CD8-positive, alpha-beta T cell (primary cell): ENCODE measurements at regions of chr6 and their contacts with region 1.

Region 1: GRCh38 chr6:135909737-135910387 is 58.4 kb downstream of the PDE7B start:
- DNase-seq: peak; percentile 12 to 84 (median 59)
- ATAC-seq: peak; percentile 92
- H3K4me3 ChIP-seq: no peak overlapping the region
- H3K4me3 Mint-ChIP-seq: no peak overlapping the region
- H3K27ac ChIP-seq: no peak overlapping the region
- H3K27ac Mint-ChIP-seq: no peak overlapping the region
- H3K4me1 ChIP-seq: no peaks in the 10 kb centered on the region
- H3K4me1 Mint-ChIP-seq: peaks cover 4% of the 10 kb centered on the region
- H3K27me3 ChIP-seq: no peaks in the 10 kb centered on the region
- H3K27me3 Mint-ChIP-seq: no peaks in the 10 kb centered on the region
- CTCF ChIP-seq: peak; percentile 68

Region 2: GRCh38 chr6:135506270-135506997 is 403.4 kb before region 1 on chr6:
- CTCF ChIA-PET with region 1: interaction called, 10 read pairs
- POLR2A ChIA-PET with region 1: no interaction called
- intact Hi-C with region 1: loop called (anchors 1 to 2 kb)
- DNase-seq: peak in 3 of 9 experiments; percentile 7 to 76 (median 65)
- ATAC-seq: peak; percentile 82
- H3K4me3 ChIP-seq: no peak overlapping the region
- H3K4me3 Mint-ChIP-seq: peak overlapping the region; percentile 13
- H3K27ac ChIP-seq: peak overlapping the region in 1 of 2 experiments; percentile 30
- H3K27ac Mint-ChIP-seq: no peak overlapping the region
- H3K4me1 ChIP-seq: no peaks in the 10 kb centered on the region
- H3K4me1 Mint-ChIP-seq: peaks cover 4% of the 10 kb centered on the region
- H3K27me3 ChIP-seq: no peaks in the 10 kb centered on the region
- H3K27me3 Mint-ChIP-seq: no peaks in the 10 kb centered on the region
- CTCF ChIP-seq: peak; percentile 63

Region 3: GRCh38 chr6:135606392-135606791 is 303.5 kb before region 1 on chr6:
- CTCF ChIA-PET with region 1: no interaction called
- POLR2A ChIA-PET with region 1: no interaction called
- intact Hi-C with region 1: no loop called
- DNase-seq: no peak
- ATAC-seq: no peak
- H3K4me3 ChIP-seq: no peak overlapping the region
- H3K4me3 Mint-ChIP-seq: no peak overlapping the region
- H3K27ac ChIP-seq: no peak overlapping the region
- H3K27ac Mint-ChIP-seq: no peak overlapping the region
- H3K4me1 ChIP-seq: no peaks in the 10 kb centered on the region
- H3K4me1 Mint-ChIP-seq: no peaks in the 10 kb centered on the region
- H3K27me3 ChIP-seq: no peaks in the 10 kb centered on the region
- H3K27me3 Mint-ChIP-seq: no peaks in the 10 kb centered on the region
- CTCF ChIP-seq: no peak

Region 4: DNA sequence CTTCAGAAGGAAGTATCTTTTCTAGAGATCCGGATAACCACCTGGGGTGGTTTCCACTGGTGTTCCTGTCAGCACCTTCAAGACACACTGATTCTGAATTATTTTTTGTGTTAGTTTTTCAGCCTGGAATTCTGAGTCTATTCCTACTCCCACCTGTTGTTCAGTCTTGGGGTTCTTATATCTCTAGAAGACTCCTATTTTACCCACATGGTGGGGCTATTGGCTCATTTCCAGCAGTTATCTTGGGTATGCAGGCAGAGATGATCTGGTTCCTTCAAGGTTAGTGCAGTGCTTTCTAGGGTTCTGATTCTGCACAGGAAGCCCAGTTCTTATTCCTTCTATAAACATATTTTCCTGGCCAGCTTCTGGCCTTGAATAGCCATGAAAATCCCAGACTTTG is 234.0 kb before region 1 on chr6:
- CTCF ChIA-PET with region 1: interaction called, 114 read pairs
- POLR2A ChIA-PET with region 1: interaction called, 6 read pairs
- intact Hi-C with region 1: loop called (anchors 1 kb)
- DNase-seq: peak in 7 of 9 experiments; percentile 4 to 75 (median 38)
- ATAC-seq: peak; percentile 75
- H3K4me3 ChIP-seq: no peak overlapping the region
- H3K4me3 Mint-ChIP-seq: no peak overlapping the region
- H3K27ac ChIP-seq: no peak overlapping the region
- H3K27ac Mint-ChIP-seq: no peak overlapping the region
- H3K4me1 ChIP-seq: no peaks in the 10 kb centered on the region
- H3K4me1 Mint-ChIP-seq: no peaks in the 10 kb centered on the region
- H3K27me3 ChIP-seq: no peaks in the 10 kb centered on the region
- H3K27me3 Mint-ChIP-seq: no peaks in the 10 kb centered on the region
- CTCF ChIP-seq: peak; percentile 72

Region 5: DNA sequence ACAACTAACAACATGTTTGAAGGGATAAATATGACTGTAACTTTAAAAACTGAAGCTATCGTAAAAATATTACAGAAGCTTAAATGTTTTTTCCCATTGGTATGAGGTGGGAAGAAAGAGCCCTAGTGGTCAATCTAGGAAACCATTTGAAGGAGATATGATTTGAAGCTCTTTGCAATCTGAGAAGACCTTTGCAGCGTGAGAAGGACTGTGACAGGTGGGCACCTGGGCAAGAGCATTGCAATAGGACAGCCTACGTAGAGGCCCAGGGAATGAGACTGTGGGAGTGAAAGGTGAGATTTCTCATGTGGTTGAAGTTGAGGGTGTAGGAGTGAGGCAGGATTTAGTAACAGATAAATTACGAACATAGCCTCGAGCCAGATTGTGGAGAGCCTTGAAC is 166.4 kb before region 1 on chr6:
- CTCF ChIA-PET with region 1: interaction called, 12 read pairs
- POLR2A ChIA-PET with region 1: no interaction called
- intact Hi-C with region 1: no loop called
- DNase-seq: no peak
- ATAC-seq: no peak
- H3K4me3 ChIP-seq: no peak overlapping the region
- H3K4me3 Mint-ChIP-seq: no peak overlapping the region
- H3K27ac ChIP-seq: no peak overlapping the region
- H3K27ac Mint-ChIP-seq: no peak overlapping the region
- H3K4me1 ChIP-seq: no peaks in the 10 kb centered on the region
- H3K4me1 Mint-ChIP-seq: no peaks in the 10 kb centered on the region
- H3K27me3 ChIP-seq: no peaks in the 10 kb centered on the region
- H3K27me3 Mint-ChIP-seq: no peaks in the 10 kb centered on the region
- CTCF ChIP-seq: no peak

Region 6: DNA sequence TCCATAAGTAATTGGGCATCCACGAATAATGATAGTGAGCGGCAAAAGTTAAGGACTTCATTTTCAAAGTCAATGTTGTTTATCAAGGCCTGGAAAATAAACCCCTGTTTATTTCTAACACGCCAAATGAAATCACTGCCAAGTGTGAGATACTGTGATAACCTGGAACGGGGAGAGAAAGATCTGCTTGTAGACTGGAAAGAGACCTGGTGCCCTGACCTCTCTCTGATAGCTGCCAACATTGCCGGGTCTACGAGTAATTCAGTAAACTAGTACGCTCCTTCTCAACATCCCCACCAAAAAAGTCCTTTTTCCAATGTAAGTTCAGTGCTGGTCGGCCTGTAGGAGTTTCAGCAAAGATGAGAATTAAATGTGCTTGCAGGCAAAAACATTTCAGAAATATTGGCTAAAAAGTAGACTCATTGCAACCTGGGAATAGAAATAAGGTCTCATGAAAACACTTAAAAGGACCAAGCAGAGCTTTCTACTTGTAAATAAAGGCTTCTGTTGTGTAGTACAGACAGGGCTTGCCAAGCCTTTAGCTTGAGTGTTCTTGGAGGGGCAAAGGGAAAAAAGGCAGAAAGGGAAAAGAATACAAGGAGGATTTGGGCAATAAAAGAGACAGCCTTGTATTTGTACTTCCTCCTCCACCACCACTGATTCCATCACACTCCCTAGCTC is 14.5 kb before region 1 on chr6:
- CTCF ChIA-PET with region 1: interaction called, 23 read pairs
- POLR2A ChIA-PET with region 1: interaction called, 8 read pairs
- intact Hi-C with region 1: no loop called
- DNase-seq: no peak
- ATAC-seq: no peak
- H3K4me3 ChIP-seq: no peak overlapping the region
- H3K4me3 Mint-ChIP-seq: no peak overlapping the region
- H3K27ac ChIP-seq: no peak overlapping the region
- H3K27ac Mint-ChIP-seq: no peak overlapping the region
- H3K4me1 ChIP-seq: no peaks in the 10 kb centered on the region
- H3K4me1 Mint-ChIP-seq: peaks cover 9% of the 10 kb centered on the region
- H3K27me3 ChIP-seq: no peaks in the 10 kb centered on the region
- H3K27me3 Mint-ChIP-seq: no peaks in the 10 kb centered on the region
- CTCF ChIP-seq: no peak

Region 7: GRCh38 chr6:136086686-136087085 is 176.8 kb after region 1 on chr6:
- CTCF ChIA-PET with region 1: no interaction called
- POLR2A ChIA-PET with region 1: no interaction called
- intact Hi-C with region 1: no loop called
- DNase-seq: no peak
- ATAC-seq: no peak
- H3K4me3 ChIP-seq: no peak overlapping the region
- H3K4me3 Mint-ChIP-seq: no peak overlapping the region
- H3K27ac ChIP-seq: no peak overlapping the region
- H3K27ac Mint-ChIP-seq: no peak overlapping the region
- H3K4me1 ChIP-seq: no peaks in the 10 kb centered on the region
- H3K4me1 Mint-ChIP-seq: no peaks in the 10 kb centered on the region
- H3K27me3 ChIP-seq: no peaks in the 10 kb centered on the region
- H3K27me3 Mint-ChIP-seq: no peaks in the 10 kb centered on the region
- CTCF ChIP-seq: no peak

Region 8: DNA sequence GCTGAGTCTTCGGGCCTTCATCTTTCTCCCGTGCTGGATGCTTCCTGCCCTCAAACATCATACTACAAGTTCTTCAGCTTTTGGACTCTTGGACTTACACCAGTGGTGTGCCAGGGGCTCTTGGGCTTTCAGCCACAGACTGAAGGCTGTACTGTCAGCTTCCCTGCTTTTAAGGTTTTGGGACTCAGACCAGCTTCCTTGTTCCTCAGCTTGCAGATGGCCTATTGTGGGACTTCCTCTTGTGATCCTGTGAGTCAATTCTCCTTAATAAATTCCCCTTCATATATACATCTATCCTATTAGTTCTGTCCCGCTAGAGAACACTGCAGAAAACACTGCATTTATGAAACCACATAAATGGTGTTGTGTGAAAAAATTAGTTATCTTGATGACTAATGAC is 393.7 kb after region 1 on chr6:
- CTCF ChIA-PET with region 1: no interaction called
- POLR2A ChIA-PET with region 1: no interaction called
- intact Hi-C with region 1: no loop called
- DNase-seq: no peak
- ATAC-seq: no peak
- H3K4me3 ChIP-seq: no peak overlapping the region
- H3K4me3 Mint-ChIP-seq: no peak overlapping the region
- H3K27ac ChIP-seq: no peak overlapping the region
- H3K27ac Mint-ChIP-seq: no peak overlapping the region
- H3K4me1 ChIP-seq: no peaks in the 10 kb centered on the region
- H3K4me1 Mint-ChIP-seq: no peaks in the 10 kb centered on the region
- H3K27me3 ChIP-seq: peaks cover 0 to 2% of the 10 kb centered on the region in 2 experiments
- H3K27me3 Mint-ChIP-seq: peaks cover 2% of the 10 kb centered on the region
- CTCF ChIP-seq: no peak